Upper lobe of right lung (tissue), 1 donor: ENCODE measurements at regions of chr13 and their contacts with region 1.

Region 1: GRCh38 chr13:26075498-26075897 is 23.7 kb upstream of the SHISA2 start:
- DNase-seq: no peak
- ATAC-seq: no peak
- H3K4me3 ChIP-seq: no peak overlapping the region
- H3K27ac ChIP-seq: no peak overlapping the region
- H3K4me1 ChIP-seq: no peaks in the 10 kb centered on the region
- H3K27me3 ChIP-seq: peaks cover 3% of the 10 kb centered on the region
- CTCF ChIP-seq: no peak

Region 2: GRCh38 chr13:25561812-25562211 is 513.7 kb before region 1 on chr13:
- intact Hi-C with region 1: loop called (anchors 10 kb)
- DNase-seq: no peak
- ATAC-seq: no peak
- H3K4me3 ChIP-seq: no peak overlapping the region
- H3K27ac ChIP-seq: no peak overlapping the region
- H3K4me1 ChIP-seq: no peaks in the 10 kb centered on the region
- H3K27me3 ChIP-seq: no peaks in the 10 kb centered on the region
- CTCF ChIP-seq: no peak